K562 (cell line): ENCODE measurements at regions of chr20 and their contacts with region 1.

Region 1: GRCh38 chr20:46132705-46133120 is 14.6 kb downstream of the CD40 start:
- DNase-seq: peak; percentile 76 to 87 (median 84)
- ATAC-seq: peak; percentile 99
- H3K4me3 ChIP-seq: no peak overlapping the region
- H3K27ac ChIP-seq: no peak overlapping the region
- H3K4me1 ChIP-seq: 0 out of 5 replicates have a peak, but pooled peaks cover 0 to 7% of the 10 kb centered on the region in 2 experiments
- H3K27me3 ChIP-seq: peaks cover 3 to 43% of the 10 kb centered on the region in 2 experiments; a peak in 4 of 5 replicates
- CTCF ChIP-seq: peak; percentile 92 to 93 (median 93)
- EP300 ChIP-seq: no peak
- POLR2A ChIP-seq: no peak
- RAD21 ChIP-seq: peak; percentile 79 to 93

Region 2: DNA sequence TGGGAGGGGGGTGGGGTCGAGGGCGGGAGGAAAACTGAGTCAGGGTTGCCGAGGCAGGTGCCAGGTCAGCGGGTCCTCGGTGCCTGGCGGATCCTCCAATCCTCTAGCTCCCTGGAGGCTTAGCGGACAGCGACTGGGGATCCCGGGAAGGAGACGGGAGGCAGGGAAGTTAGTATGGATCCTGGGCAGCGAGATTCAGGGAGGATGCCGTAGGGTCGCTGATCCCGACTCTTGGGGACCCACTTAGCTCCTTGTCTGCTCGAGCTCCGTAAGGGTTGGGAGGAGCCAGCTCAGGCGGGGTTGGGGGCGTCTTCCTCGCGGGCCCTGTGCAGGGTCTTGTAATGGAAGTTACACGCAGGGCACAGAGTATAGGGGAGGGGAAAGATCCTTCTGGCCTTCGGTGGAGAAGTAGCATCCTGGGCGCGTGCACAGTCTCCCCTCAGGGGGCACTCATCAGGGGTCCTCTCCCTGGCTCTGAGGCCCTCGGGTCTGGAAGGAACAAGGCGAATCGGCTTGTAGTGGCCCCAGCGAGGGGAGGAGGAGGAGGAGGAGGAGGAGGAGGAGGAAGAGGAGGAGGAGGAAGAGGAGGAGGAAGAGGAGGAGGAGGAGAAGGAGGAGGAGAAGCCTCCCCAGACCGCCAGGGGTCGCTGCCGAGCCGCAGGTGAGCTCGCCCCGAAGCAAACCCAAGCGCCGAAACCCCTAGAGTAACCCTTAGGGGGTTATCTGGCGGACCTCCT is 110.1 kb before region 1 on chr20:
- CTCF ChIA-PET with region 1: no interaction called
- POLR2A ChIA-PET with region 1: no interaction called
- in situ Hi-C with region 1: no loop called
- intact Hi-C with region 1: loop called (anchors 5 kb)
- DNase-seq: peak; percentile 74 to 78 (median 76)
- ATAC-seq: peak; percentile 63
- H3K4me3 ChIP-seq: peak overlapping the region; percentile 78; the same call in 1 of the 2 replicates
- H3K27ac ChIP-seq: no peak overlapping the region
- H3K4me1 ChIP-seq: peaks cover 14 to 23% of the 10 kb centered on the region in 2 experiments
- H3K27me3 ChIP-seq: 0 out of 5 replicates have a peak, but pooled peaks cover 0 to 7% of the 10 kb centered on the region in 2 experiments
- CTCF ChIP-seq: peak; percentile 71 to 85 (median 85)
- EP300 ChIP-seq: no peak
- POLR2A ChIP-seq: no peak
- RAD21 ChIP-seq: peak; percentile 47 to 76

Region 3: DNA sequence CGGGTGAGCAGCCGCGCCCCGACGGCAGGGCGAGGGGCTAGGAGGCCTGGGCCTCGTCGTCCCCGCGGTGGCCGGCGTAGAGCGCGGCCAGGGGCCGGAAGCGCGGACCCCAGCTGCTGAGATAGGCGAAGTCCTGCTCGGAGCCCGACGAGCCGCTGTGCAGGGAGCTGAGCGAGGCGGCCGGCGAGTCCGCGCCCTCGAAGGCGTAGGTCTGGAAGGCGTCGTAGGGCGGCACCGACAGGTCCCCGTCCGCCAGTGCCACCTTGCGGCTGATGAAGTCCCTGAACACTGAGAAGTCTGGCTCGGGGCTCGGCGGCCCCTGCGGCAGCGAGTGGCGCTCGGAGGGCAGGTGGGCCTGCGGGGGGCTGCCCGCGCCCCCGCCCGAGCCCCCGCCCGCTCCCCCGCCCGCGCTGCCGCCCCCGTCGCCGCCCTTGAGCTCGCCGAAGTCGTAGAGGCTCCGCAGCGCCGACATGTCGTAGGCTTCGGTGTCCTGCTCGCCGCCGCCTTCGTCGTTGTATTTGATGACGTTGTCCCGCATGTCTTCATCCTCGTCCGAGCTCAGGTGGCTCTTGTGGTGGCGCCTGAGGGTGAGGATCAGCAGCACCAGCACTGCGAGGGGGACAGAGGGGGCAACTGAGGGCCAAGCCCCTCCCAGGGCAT is 41.9 kb after region 1 on chr20:
- CTCF ChIA-PET with region 1: no interaction called
- POLR2A ChIA-PET with region 1: no interaction called
- in situ Hi-C with region 1: no loop called
- intact Hi-C with region 1: loop called (anchors 2 kb)
- DNase-seq: peak; percentile 79 to 88 (median 84)
- ATAC-seq: peak; percentile 99
- H3K4me3 ChIP-seq: no peak overlapping the region
- H3K27ac ChIP-seq: no peak overlapping the region
- H3K4me1 ChIP-seq: peaks cover 0 to 10% of the 10 kb centered on the region in 2 experiments; a peak in 1 of 5 replicates
- H3K27me3 ChIP-seq: peaks cover 21 to 73% of the 10 kb centered on the region in 2 experiments
- CTCF ChIP-seq: peak; percentile 51 to 88 (median 72)
- EP300 ChIP-seq: no peak
- POLR2A ChIP-seq: no peak
- RAD21 ChIP-seq: peak in 1 of 2 experiments; percentile 54; a peak in 3 of 4 replicates

Region 4: DNA sequence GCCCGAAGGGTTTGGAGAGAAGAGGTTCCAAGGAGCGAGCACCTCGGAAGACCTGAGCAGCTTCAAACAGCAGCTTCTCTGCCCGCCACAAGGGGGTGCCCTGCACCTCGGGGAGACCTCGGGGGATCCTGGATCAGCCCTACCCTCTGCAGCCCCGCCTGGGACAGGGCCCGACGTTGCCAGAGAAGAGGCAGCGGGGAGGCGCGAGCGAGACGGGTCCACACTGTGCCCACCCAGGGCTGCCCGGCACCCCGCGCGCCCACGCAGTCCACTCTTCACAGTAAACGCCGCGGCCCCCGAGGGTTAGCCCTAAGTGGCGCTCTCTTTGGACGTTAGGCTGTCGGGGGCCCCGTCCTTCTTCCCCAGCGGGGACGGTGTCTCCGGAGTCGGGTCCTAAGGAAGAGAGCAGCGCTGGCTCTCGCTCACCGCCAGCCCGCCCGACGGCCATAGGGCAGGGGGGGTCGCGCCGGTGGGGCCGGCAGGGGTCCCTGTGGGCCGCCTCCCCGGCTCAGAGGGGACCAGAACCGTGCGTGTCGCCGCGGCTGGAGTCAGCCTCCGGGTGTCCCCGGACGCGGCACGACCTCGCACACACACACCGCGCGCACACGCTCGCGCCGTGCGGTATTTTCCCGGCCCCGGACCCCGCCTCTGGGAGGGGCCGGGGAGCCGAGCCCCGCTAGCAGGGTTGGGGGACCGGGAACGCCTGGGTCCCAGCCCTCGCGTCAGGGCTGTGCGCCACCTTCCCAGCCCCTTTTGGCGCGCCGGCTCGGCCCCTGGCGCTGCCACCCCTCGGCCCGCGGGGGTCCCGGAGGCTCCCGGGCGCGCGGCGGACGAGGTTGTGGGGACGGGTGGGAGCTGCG is 174.7 kb after region 1 on chr20:
- CTCF ChIA-PET with region 1: no interaction called
- POLR2A ChIA-PET with region 1: no interaction called
- in situ Hi-C with region 1: loop called (anchors 25 kb)
- intact Hi-C with region 1: loop called (anchors 5 kb)
- DNase-seq: peak; percentile 69 to 91 (median 88)
- ATAC-seq: peak; percentile 93
- H3K4me3 ChIP-seq: peak overlapping the region; percentile 31; the same call in 1 of the 2 replicates
- H3K27ac ChIP-seq: no peak overlapping the region
- H3K4me1 ChIP-seq: peaks cover 0 to 28% of the 10 kb centered on the region in 2 experiments; a peak in 2 of 5 replicates
- H3K27me3 ChIP-seq: peaks cover 11 to 78% of the 10 kb centered on the region in 2 experiments; a peak in 4 of 5 replicates
- CTCF ChIP-seq: peak; percentile 88 to 92 (median 89)
- EP300 ChIP-seq: no peak
- POLR2A ChIP-seq: no peak
- RAD21 ChIP-seq: peak; percentile 70 to 87

Region 5: DNA sequence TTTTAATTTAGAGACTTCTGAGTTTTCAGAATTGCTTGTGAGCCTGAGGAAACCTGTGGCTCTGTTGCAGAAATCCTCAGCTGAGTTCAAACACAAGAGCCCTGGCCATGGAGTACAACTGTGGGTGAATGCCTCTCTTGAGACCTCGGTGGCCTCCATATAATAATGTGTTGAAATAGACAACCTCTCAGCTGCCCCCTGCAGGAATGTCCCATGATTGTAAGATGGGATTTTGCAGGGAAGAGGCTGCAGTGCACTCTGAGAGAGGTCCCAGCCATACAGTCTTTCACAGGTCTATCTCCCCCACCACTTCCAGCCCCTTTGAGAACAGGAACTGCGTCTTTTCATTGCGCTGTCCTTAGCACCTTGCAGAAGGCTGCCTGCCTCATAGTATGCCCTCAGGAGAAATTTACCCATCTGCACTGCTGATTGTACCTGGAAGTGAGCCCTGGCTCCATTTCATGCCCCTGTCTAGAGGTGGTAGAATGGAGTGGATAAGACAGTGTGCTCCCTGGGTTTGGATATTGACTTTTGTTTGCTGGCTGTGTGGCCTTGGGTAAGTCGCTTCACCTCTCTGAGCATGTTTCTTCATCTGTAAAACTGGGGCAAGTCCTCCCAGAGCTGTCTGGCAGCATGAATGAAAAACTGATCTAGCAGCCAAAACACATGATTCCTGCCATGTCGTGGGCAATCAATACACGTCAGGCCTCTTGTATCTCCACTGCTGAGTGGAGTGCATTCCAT is 192.4 kb after region 1 on chr20:
- CTCF ChIA-PET with region 1: no interaction called
- POLR2A ChIA-PET with region 1: no interaction called
- in situ Hi-C with region 1: loop called (anchors 25 kb)
- intact Hi-C with region 1: loop called (anchors 1 kb)
- DNase-seq: peak; percentile 43 to 57 (median 52)
- ATAC-seq: peak; percentile 95
- H3K4me3 ChIP-seq: no peak overlapping the region
- H3K27ac ChIP-seq: no peak overlapping the region
- H3K4me1 ChIP-seq: peaks cover 0 to 6% of the 10 kb centered on the region in 2 experiments; a peak in 1 of 5 replicates
- H3K27me3 ChIP-seq: peaks cover 11 to 58% of the 10 kb centered on the region in 2 experiments; a peak in 4 of 5 replicates
- CTCF ChIP-seq: peak; percentile 57 to 67 (median 61)
- EP300 ChIP-seq: no peak
- POLR2A ChIP-seq: no peak
- RAD21 ChIP-seq: peak in 1 of 2 experiments; percentile 40; a peak in 2 of 4 replicates

Region 6: GRCh38 chr20:46411637-46412036 is 278.9 kb after region 1 on chr20:
- CTCF ChIA-PET with region 1: no interaction called
- POLR2A ChIA-PET with region 1: interaction called, 3 read pairs
- in situ Hi-C with region 1: no loop called
- intact Hi-C with region 1: loop called (anchors 1 kb)
- DNase-seq: no peak
- ATAC-seq: no peak
- H3K4me3 ChIP-seq: no peak overlapping the region
- H3K27ac ChIP-seq: no peak overlapping the region
- H3K4me1 ChIP-seq: peaks cover 6 to 11% of the 10 kb centered on the region in 2 experiments; a peak in 3 of 5 replicates
- H3K27me3 ChIP-seq: peaks cover 10 to 15% of the 10 kb centered on the region in 2 experiments; a peak in 4 of 5 replicates
- CTCF ChIP-seq: no peak
- EP300 ChIP-seq: no peak
- POLR2A ChIP-seq: no peak
- RAD21 ChIP-seq: no peak